ENCODE measurements at regions of chr15 and their contacts with region 1.

Region 1: GRCh38 chr15:89893696-89894455 is at the start of gene AP3S2:
- DNase-seq: peak; percentile 97
- H3K4me3 Mint-ChIP-seq: peak within 1 kb of the TSS; percentile 97
- H3K27ac Mint-ChIP-seq: peak within 1 kb of the TSS; percentile 97
- H3K4me1 Mint-ChIP-seq: peaks cover 27% of the 10 kb centered on the region
- H3K27me3 Mint-ChIP-seq: no peaks in the 10 kb centered on the region
- total RNA-seq, gene AP3S2: 20.3 and 20.6 TPM in 2 replicates

Region 2: DNA sequence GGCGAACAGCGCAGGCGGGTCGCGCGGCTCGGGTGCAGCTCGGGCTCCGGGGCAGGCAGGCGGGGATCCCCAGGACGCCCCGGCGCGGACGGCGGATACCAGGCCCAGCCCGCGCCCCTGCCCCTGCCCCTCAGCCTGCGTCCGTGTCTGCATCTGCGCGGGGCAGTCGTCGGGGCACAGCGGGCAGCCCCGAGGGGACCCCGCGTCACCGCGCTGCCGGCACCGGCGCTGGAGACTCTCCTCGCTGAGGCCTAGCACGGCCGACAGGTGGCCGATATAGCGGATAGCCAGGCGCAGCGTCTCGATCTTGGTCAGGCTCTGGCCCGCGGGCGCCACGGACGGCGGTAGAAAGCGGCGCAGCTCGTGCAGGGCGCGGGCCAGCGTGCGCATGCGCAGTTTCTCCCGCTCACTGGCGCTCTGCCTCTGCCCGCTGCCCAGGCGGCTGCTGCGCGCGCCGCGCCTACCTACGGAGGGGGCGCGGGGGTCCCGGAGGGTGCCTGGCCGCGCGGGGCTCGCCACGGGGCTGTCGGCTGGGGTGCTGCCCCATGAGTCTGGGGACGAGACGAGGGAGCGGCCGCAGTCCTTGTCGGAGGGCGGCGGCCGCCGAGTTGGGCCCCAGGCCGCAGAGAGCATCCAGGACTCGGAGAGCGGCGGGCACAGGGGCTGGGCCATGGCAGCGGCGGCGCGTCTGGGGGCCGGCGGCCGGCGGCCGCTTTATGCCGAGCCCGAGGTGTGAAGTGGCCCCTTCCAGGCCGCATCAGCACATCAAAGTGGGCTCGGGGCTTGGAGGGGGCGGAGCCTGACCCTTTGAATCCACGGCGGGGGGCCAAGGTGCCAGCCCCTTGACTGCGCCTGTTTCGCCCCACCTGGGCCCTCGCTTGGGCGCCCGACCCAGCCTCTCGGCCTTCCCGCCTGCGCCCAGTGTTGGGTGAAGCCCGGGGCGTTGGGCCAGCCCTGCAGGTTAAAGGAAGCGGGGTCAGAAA is 143.0 kb before region 1 on chr15 and contains the start of gene MESP1:
- intact Hi-C with region 1: loop called (anchors 5 kb)
- DNase-seq: peak; percentile 96
- H3K4me3 Mint-ChIP-seq: peak within 1 kb of the TSS; percentile 80
- H3K27ac Mint-ChIP-seq: peak within 1 kb of the TSS; percentile 43
- H3K4me1 Mint-ChIP-seq: peaks cover 2% of the 10 kb centered on the region
- H3K27me3 Mint-ChIP-seq: peaks cover 38% of the 10 kb centered on the region
- total RNA-seq, gene MESP1: 5.6 and 7.3 TPM in 2 replicates

Region 3: DNA sequence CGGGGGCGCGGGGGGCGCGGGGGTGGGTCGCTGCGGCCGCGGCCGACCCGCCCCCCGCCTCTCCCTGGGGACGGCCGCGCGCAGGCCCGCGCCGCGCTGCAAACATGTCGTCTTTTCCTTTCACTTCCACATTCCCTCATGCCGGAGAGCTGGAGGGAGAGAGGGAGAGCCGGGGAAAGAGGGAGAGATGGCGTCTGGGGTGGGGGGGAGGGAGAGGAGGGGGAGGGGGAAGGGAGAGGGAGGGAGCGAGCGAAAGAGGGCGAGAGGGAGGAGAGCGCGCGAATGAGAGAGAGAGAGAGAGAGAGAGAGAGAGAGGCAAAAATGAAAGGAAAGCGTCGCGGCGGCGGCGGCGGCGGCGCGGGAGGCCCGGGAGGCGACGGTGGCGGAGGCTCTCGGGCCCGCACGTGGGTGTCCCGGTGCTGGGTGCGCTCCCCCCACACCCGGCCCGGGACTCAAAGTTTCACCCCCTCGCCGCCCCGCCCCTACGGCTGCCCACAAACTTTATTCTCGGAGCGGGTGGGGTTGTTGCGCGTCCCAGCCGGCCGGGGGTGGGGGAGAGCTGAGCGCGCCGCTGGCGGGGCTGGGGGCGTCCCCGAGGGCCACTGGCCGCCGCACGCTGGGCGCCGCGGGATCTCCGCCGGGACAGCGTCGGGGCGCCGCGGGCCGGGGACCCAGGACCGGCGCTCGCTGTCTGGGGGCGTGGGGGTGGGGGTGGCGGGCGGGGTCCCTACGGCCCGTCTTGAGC is 108.0 kb after region 1 on chr15:
- intact Hi-C with region 1: loop called (anchors 1 kb)
- DNase-seq: peak; percentile 90
- H3K4me3 Mint-ChIP-seq: peak overlapping the region; percentile 88
- H3K27ac Mint-ChIP-seq: peak overlapping the region; percentile 92
- H3K4me1 Mint-ChIP-seq: peaks cover 40% of the 10 kb centered on the region
- H3K27me3 Mint-ChIP-seq: peaks cover 4% of the 10 kb centered on the region

Region 4: DNA sequence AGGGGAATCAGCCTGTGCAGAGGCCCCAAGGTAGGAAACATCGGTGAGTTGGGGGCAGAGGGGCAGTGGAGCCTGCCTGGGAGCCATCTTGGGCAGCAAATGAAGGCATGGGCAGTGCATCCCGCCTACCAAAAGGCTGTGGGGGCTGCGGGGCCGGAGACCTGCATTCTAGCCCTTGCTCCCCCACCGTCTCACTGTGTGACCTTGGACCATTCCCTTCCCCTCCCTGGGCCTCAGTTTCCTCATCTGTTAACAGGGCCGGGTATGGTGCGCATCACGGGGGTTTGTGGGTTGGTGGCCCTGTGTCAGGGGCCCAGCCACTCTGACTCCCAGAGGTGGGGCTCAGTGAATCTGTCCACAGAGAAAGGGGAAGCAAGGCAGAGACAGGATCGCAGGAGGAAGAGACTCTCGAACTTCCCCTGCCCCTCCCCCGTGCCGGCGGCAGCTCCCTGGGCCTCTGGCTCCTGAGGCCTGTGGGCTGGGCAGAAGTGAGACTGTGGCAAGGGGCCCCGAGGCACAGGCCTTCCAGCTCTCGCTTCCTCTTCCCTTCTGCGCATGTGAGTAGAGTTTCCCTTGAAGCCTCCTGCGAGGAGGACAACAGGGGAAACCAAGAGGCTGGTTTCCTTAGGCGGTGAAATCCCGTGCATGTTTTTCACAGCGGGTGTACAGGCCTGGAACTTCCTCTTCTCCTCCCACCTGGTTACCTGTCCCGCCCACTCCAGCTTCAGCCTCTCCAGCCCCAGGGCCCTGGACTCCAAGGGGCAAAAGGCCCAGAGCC is 165.5 kb after region 1 on chr15:
- intact Hi-C with region 1: loop called (anchors 1 kb)
- DNase-seq: peak; percentile 92
- H3K4me3 Mint-ChIP-seq: peak overlapping the region; percentile 68
- H3K27ac Mint-ChIP-seq: peak overlapping the region; percentile 93
- H3K4me1 Mint-ChIP-seq: peaks cover 35% of the 10 kb centered on the region
- H3K27me3 Mint-ChIP-seq: no peaks in the 10 kb centered on the region

Region 5: DNA sequence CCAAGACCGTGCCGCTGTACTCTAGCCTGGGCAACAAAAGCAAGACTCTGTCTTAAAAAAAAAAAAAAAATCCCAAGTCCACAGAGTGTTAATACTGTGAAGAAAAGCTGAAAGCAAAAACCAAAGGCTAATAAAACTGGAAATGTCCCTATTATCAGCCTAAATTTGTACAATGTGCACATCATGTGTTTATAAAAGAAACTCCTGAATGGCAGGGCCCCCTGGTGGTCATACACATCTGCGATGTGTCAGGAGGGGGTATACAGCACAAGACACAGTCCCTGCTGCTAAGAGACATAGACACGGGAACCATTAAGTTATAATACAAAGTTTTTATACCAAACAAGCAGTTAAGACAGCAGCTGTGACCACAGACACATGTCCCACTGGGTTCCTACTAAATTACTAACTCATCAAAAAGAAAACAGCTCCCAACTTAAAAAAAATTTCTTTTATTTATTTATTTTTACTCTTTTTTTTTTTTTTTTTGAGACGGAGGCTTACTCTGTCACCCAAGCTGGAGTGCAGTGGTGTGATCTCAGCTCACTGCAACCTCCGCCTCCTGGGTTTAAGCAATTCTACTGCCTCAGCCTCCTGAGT is 177.4 kb after region 1 on chr15:
- intact Hi-C with region 1: loop called (anchors 1 kb)
- DNase-seq: peak; percentile 93
- H3K4me3 Mint-ChIP-seq: no peak overlapping the region
- H3K27ac Mint-ChIP-seq: no peak overlapping the region
- H3K4me1 Mint-ChIP-seq: peaks cover 13% of the 10 kb centered on the region
- H3K27me3 Mint-ChIP-seq: no peaks in the 10 kb centered on the region

Region 6: DNA sequence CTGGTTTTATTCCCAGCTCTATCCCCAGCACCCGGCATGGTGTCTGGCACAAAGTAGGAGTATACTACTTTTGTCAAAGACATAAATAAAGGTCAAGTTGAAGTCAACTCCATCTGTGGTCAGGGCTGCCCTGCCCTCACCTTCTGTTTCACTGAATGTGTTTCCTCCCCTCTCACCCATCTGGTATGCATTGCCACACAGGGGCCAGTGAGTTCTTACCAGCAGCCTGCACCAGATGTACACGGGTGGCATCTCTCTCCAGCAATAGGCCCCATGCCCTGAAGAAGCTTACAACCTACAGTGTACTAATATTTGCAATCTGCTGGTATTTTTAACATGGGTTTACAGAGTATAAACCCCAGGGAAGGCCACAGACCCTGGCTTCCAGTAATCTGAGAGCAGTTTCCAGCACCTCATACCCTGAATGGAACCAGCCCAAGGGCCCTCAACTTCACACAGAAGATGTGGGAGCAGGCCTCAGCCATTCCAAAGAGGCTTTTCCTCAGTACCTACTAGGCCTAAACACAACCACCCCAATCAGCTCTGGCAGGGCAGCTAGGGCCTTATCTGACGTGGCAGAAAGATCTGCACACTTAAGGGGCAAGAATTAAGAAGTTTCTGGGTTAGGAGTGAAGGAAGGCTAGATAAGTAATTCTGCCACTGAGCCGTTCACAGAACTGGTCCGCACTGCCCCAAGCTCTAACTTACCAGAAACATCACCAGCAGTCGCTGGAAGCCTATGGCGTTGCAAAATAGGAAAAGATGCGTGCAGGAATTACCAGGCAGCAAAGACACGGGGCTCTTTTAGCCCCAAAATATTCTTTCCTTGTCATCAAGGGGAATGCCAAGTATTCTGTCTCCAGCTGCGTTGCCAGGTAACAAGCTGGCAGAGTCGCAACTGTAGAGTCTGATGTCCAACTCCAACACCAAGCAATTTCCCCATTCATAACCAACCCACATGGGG is 206.3 kb after region 1 on chr15:
- intact Hi-C with region 1: loop called (anchors 2 kb)
- DNase-seq: peak; percentile 74
- H3K4me3 Mint-ChIP-seq: peak overlapping the region; percentile 86
- H3K27ac Mint-ChIP-seq: peak overlapping the region; percentile 98
- H3K4me1 Mint-ChIP-seq: peaks cover 70% of the 10 kb centered on the region
- H3K27me3 Mint-ChIP-seq: peaks cover 8% of the 10 kb centered on the region

Region 7: DNA sequence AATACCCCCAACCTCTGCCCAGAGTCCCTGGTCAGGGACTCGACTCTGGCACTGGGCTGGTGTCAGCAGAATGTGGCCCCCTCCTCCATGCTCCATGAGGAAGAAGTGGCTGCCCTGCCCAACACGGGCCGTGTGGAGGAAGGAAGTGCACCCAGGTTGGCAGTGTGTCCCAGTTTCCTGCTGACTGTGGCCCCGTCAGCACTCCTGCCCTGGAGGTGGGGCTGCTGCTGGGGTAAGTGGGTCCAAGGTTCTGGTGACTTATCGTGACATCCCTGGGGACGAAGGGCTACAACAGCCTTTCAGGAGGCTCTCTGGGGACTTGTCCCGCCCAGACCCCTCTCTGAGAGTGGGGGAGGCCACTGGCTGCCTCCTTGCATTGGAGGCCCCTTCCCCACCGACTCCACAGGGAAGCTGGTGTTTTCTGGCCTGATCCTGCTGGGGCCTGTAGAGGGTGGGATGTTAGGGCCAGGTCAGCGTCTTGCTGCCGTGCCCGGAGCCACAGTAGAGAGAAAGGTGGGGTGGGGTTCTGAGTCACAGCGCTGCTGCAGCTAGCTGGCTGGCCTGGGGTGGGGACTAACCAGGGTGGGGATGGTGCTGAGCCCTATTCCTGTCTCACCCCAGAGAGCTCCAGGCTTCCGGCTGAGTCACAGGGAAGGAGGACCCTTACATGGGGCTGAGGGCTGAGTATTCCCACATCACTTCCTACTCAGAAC is 317.7 kb after region 1 on chr15:
- intact Hi-C with region 1: no loop called
- DNase-seq: no peak
- H3K4me3 Mint-ChIP-seq: no peak overlapping the region
- H3K27ac Mint-ChIP-seq: no peak overlapping the region
- H3K4me1 Mint-ChIP-seq: peaks cover 23% of the 10 kb centered on the region
- H3K27me3 Mint-ChIP-seq: no peaks in the 10 kb centered on the region

Region 8: GRCh38 chr15:90839187-90840071 is 945.6 kb after region 1 on chr15:
- intact Hi-C with region 1: loop called (anchors 10 kb)
- DNase-seq: peak; percentile 74
- H3K4me3 Mint-ChIP-seq: peak overlapping the region; percentile 76
- H3K27ac Mint-ChIP-seq: peak overlapping the region; percentile 93
- H3K4me1 Mint-ChIP-seq: peaks cover 69% of the 10 kb centered on the region
- H3K27me3 Mint-ChIP-seq: no peaks in the 10 kb centered on the region

Measured in activated CD4-positive, alpha-beta T cell treated with anti-CD3 and anti-CD28 coated beads, Interleukin-2, amount 10 ng/mL, durations not matched to agents 24 days and 14 days (primary cell).